Head of caudate nucleus (tissue), 42 donors: ENCODE measurements at regions of chr20 and their contacts with region 1.

Region 1: GRCh38 chr20:25623736-25624499 is at the start of gene NANP:
- DNase-seq: peak; percentile 87 to 97 (median 93)

Region 2: DNA sequence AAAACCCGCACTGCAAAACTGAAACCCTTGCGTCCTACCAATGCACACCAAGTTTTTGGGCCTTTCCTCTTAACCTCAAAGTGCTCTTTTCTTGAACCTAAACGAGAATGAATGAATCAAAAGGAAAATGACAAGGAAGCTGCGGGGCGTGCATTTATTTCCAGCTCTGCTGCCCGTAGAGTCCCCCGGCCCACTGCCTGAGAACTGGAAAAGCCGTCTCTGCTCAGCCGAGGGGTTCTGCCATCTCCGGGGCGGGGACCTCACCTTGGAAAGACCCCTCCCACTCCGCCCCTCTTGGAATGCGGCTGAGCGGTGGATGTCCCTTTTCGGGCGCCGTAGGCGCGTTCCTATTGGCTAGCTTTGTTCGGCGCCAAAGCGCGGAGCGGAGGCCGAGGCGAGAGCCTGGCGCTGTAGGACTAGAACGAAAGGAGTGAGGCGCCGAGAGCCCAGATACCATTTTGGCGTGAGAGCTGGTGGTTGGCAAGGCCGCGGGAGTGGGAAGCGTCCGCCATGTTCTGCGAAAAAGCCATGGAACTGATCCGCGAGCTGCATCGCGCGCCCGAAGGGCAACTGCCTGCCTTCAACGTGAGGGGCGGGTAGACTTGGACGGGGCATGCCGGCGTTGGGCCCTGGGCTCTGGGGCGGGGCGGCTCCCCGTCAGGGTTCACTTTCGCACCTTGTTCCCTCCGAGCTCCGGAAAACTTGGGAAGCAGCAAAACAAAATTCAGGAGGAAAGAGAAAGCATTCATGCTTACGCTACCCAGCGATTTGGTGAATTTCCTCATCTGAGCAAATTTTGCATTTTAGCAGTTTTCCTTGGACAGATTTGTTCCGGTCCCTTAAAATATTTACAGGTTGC is 216.4 kb before region 1 on chr20 and contains the start of gene GINS1:
- intact Hi-C with region 1: loop called (anchors 10 kb)
- DNase-seq: peak; percentile 77 to 95 (median 90)

Region 3: DNA sequence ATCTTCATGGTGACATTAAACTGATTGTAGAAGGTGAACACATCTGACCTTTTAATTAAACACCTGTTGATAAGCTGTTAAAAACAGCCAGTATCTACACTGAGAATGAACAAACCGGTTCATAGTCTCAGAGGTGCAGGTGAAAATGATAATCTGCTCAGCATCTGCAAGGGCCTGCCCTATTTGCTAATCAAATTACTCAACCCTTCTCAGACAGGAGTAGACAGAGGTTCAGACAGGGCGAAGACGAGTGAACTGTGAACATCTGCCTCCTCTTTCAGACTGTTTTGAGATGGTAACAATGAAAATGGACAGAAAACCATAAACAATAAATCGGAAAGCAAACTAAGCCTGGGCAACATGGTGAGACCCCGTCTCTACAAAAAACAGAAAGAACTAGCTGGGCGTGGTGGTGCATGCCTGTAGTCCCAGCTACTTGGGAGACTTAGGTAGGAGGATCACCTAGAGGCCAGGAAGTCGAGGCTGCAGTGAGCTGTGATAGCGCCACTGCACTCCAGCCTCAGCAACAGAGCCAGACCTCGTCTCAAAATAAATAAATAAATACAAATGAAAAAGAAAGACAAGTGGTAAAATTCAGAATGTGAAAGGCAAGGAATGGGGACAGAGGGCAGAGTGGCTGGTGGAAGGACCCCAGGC is 94.5 kb before region 1 on chr20:
- intact Hi-C with region 1: no loop called
- DNase-seq: no peak

Region 4: GRCh38 chr20:25539742-25540672 is 83.9 kb before region 1 on chr20:
- intact Hi-C with region 1: loop called (anchors 10 kb)
- DNase-seq: peak; percentile 34 to 84 (median 61)

Region 5: GRCh38 chr20:25696384-25697131 is 72.6 kb after region 1 on chr20 and contains the start of gene ZNF337:
- intact Hi-C with region 1: loop called (anchors 5 kb)
- DNase-seq: peak; percentile 89 to 98 (median 95)

Region 6: GRCh38 chr20:25865380-25866118 is 241.6 kb after region 1 on chr20:
- intact Hi-C with region 1: loop called (anchors 5 kb)
- DNase-seq: peak; percentile 79 to 96 (median 90)